ENCODE measurements at regions of chr7 and their contacts with region 1.

Region 1: GRCh38 chr7:20352573-20353304 is 22.0 kb downstream of the ITGB8 start:
- DNase-seq: peak; percentile 73 to 100
- H3K4me3 ChIP-seq: peak overlapping the region; percentile 15; the same call in 1 of the 2 replicates
- H3K27ac ChIP-seq: peak overlapping the region; percentile 92
- H3K4me1 ChIP-seq: peaks cover 38% of the 10 kb centered on the region
- H3K27me3 ChIP-seq: no peaks in the 10 kb centered on the region
- CTCF ChIP-seq: no peak

Region 2: DNA sequence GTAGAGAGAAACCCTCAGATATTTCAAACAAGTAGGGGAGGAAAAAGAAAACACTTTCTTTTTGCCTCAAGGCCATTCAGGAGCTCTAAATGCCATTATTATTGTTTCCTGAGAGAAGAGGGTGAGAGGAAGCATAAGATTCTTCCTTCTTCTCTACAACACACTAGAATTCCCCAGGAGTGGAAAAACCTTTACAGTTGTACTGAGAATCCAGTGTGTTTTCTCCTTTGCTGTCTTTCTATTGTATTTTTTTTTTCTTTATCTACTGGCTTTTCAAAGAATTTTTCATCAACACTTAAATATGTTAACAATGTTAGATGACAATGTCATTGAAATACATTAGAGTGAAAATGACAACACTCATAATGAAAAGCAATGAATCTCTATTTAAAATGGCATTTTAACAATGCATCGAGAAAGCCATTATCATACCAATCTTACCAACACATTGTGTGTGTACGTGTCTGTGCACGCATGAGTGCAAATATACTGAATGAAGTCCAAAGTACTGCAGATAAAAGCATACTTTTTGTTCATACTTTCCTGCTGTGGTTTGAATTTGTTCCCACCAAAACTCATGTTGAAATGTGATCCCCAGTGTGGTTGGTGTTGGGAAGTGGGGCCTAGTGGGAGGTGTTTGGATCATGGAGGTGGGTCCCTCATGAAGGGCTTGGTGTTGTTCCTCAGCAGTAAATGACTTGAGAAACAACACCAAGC is 111.4 kb before region 1 on chr7:
- CTCF ChIA-PET with region 1: no interaction called
- POLR2A ChIA-PET with region 1: no interaction called
- intact Hi-C with region 1: loop called (anchors 2 kb)
- DNase-seq: peak in 1 of 2 experiments; percentile 54
- H3K4me3 ChIP-seq: no peak overlapping the region
- H3K27ac ChIP-seq: no peak overlapping the region
- H3K4me1 ChIP-seq: peaks cover 15% of the 10 kb centered on the region
- H3K27me3 ChIP-seq: no peaks in the 10 kb centered on the region
- CTCF ChIP-seq: no peak

Region 3: GRCh38 chr7:20340839-20341238 is 11.9 kb before region 1 on chr7:
- CTCF ChIA-PET with region 1: no interaction called
- POLR2A ChIA-PET with region 1: no interaction called
- intact Hi-C with region 1: loop called (anchors 1 kb)
- DNase-seq: peak; percentile 50 to 95
- H3K4me3 ChIP-seq: no peak overlapping the region
- H3K27ac ChIP-seq: peak overlapping the region; percentile 59
- H3K4me1 ChIP-seq: peaks cover 17% of the 10 kb centered on the region
- H3K27me3 ChIP-seq: no peaks in the 10 kb centered on the region
- CTCF ChIP-seq: no peak

Region 4: DNA sequence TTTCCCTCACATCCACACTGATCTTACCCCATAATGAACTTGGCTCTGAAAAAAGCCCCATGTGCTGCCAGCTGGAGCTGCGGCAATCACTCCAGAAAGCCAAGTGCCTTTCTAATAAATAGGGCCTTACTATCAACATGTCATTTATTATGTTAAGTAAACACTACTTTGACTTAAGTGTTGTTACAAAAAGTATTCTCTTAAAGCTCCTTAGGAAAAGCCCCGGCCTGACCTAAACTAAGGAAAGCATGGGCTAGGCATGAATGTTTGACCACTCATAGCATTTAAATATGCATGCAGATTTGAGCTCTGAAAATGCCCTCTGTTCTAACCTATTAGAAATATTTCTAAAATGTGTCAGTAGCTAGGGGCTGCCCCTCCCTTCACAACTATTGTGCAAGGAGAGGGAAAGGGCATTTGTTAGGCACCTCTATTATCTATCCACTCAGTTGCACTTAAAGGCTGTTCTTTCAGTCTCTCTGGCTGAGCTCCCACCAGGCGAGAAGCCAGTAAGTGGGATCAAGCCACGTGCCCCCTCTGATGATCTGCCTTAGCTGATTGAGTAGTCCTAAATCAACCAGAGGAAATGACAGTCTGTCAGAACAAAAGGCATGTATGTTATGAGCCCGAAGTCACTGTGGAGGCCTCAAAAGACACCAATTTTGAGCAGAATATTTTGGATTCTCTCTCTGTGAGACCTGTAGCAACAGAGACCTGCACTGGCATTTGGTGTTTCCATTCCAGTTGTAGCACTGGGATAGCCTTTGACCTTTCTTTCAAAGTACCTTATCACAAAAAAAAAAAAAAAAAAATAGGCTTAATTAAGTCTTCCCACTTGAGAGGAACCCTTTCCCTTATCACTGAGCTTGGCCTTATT is 55.1 kb after region 1 on chr7:
- CTCF ChIA-PET with region 1: interaction called, 3 read pairs
- POLR2A ChIA-PET with region 1: no interaction called
- intact Hi-C with region 1: loop called (anchors 1 kb)
- DNase-seq: peak; percentile 59 to 91
- H3K4me3 ChIP-seq: no peak overlapping the region; the same call in 1 of the 2 replicates
- H3K27ac ChIP-seq: peak overlapping the region; percentile 72
- H3K4me1 ChIP-seq: peaks cover 30% of the 10 kb centered on the region
- H3K27me3 ChIP-seq: no peaks in the 10 kb centered on the region
- CTCF ChIP-seq: no peak

Region 5: GRCh38 chr7:21269021-21269420 is 916.3 kb after region 1 on chr7:
- CTCF ChIA-PET with region 1: no interaction called
- POLR2A ChIA-PET with region 1: interaction called, 11 read pairs
- intact Hi-C with region 1: no loop called
- DNase-seq: no peak
- H3K4me3 ChIP-seq: no peak overlapping the region
- H3K27ac ChIP-seq: no peak overlapping the region
- H3K4me1 ChIP-seq: no peaks in the 10 kb centered on the region
- H3K27me3 ChIP-seq: 0 out of 2 replicates have a peak, but pooled peaks cover 2% of the 10 kb centered on the region
- CTCF ChIP-seq: no peak